ENCODE measurements at regions of chrX and their contacts with region 1.

Region 1: DNA sequence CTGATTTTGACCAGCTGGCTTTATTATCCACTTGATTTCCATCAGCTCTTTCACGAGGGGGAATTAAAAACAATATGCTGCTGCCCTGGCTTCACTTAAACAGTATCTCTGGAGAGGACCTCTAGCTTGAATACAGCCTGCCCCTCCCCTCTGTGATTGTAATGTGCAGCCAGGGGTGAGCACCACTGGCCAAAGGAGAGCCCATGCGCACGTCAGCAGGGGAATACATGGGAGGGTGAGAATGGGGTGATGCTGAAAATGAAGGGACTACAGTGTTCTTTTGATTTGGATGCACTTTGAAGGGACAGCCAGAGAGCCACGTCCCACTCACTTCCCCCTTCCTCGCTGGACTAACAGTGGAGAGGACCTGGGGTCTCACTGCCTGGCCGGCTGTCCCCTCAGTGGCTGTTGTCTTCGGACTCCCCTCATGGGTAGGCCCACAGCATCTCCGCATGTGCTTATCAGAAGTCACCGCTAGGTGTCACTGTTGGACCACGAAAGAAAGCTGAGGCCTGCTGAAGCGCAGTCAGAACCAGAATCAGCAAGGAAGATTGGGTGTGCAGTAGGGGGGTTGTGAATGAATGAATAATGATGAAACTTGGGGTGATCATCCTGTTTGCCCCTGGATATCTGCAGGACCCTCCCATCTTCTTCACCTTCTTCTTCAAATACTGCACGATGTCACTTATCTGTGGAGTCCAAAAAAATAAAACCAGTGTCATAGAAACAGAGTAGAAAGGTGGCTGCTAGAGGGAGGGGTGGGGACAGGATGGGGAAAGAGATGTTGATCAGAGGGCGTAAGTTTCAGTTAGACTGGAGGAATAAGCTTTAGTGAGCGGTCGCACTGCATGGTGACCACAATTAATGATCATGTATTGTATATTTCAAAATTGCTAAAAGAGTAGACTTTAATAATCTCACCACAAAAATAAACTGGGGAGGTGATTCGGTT is 32.8 kb downstream of the CLCN4 start:
- DNase-seq: peak; percentile 67
- H3K4me3 ChIP-seq: no peak overlapping the region
- H3K27ac ChIP-seq: peak overlapping the region; percentile 49
- H3K4me1 ChIP-seq: peaks cover 4% of the 10 kb centered on the region
- H3K27me3 ChIP-seq: no peaks in the 10 kb centered on the region
- CTCF ChIP-seq: peak; percentile 48 to 53
- POLR2A ChIP-seq: no peak

Region 2: DNA sequence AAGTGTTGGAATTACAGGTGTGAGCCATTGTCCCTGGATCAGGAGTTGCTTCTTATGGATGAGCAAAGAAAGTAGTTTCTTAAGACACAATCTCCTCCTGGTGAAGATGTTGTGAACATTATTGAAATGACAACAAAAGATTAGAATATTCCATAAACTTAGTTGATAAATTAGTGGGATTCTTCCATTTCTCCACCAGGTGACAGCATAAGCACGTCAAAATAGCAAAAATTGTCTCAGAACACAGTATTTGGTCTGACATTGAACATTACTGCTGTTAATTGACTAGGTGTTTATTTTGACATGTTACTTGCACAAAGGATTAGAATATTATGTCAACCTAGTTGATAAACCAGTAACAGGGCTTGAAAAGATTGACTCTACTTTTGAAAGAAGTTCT is 200.8 kb before region 1 on chrX:
- CTCF ChIA-PET with region 1: no interaction called
- POLR2A ChIA-PET with region 1: no interaction called
- dilution Hi-C with region 1: no loop called
- intact Hi-C with region 1: loop called (anchors 5 kb)
- DNase-seq: peak; percentile 35
- H3K4me3 ChIP-seq: no peak overlapping the region
- H3K27ac ChIP-seq: no peak overlapping the region
- H3K4me1 ChIP-seq: no peaks in the 10 kb centered on the region
- H3K27me3 ChIP-seq: no peaks in the 10 kb centered on the region
- CTCF ChIP-seq: peak; percentile 15 to 34
- POLR2A ChIP-seq: no peak

Region 3: DNA sequence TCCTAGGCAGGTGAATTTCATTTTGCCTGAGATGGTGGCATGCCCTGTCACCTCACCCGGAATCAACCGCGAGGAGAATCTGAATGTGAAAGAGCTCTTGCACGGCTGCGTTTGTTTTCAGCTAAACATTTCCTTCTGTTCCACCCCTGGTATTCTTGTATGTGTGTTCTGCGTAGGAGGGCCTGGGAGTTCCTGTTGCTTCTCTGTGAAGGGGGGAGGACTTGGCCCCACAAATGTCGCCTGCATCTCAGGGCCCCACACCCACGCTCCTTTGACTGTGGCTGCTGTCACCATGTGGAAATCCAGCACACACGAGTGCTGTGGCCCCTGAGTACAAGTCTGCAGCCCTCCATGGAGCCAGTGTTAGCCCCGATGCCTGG is 78.6 kb before region 1 on chrX:
- CTCF ChIA-PET with region 1: no interaction called
- POLR2A ChIA-PET with region 1: no interaction called
- dilution Hi-C with region 1: no loop called
- intact Hi-C with region 1: no loop called
- DNase-seq: peak; percentile 1
- H3K4me3 ChIP-seq: no peak overlapping the region
- H3K27ac ChIP-seq: peak overlapping the region; percentile 43
- H3K4me1 ChIP-seq: peaks cover 15% of the 10 kb centered on the region
- H3K27me3 ChIP-seq: no peaks in the 10 kb centered on the region
- CTCF ChIP-seq: no peak
- POLR2A ChIP-seq: no peak

Region 4: DNA sequence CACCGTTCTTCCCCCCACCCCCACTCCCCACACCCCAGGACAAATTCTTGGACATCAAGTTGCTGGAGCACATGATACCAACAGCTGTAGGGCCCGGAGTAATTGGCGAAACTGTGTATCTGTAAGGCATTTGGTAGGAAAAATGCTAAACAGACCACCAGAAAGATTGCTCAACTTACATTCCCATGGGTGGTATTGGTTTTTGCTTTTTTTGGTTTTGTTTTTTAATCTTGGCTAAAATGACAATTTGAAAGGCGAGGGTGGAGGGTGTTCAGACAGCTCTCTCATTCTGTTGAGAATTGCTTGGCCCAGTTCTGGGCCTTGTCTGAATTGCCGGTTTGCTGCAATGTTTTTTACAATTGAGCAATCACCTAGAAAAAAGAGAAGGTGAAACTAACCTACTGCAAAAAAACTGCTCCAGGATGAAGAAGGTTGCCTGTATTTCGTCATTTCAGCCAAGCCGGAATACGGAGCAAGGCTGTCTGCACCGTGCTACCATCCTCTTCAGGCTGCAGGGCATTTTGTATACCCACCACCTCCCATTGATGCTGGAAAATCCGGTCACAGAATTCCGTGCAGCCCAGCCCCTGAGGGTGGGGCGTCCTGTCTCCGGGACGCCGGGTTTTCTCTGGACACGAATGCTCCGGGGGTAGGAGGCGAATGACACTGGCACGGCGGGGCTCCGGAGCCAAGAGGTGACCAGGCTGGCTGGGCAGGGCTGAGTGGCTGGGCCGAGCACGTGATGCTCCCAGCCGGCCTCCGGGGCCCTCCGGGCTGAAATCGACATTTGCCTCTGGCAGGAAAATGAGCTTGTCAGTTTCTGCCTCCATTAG is 33.2 kb before region 1 on chrX and contains the start of gene CLCN4:
- CTCF ChIA-PET with region 1: no interaction called
- POLR2A ChIA-PET with region 1: no interaction called
- dilution Hi-C with region 1: no loop called
- intact Hi-C with region 1: no loop called
- DNase-seq: peak; percentile 46
- H3K4me3 ChIP-seq: peak within 1 kb of the TSS; percentile 38 to 91 (median 43)
- H3K27ac ChIP-seq: peak within 1 kb of the TSS; percentile 95
- H3K4me1 ChIP-seq: peaks cover 9% of the 10 kb centered on the region
- H3K27me3 ChIP-seq: no peaks in the 10 kb centered on the region
- CTCF ChIP-seq: no peak
- POLR2A ChIP-seq: peak; percentile 30
- total RNA-seq, gene CLCN4: 17.0 and 19.8 TPM in 2 replicates

Region 5: GRCh38 chrX:10217198-10217597 is 27.6 kb after region 1 on chrX:
- CTCF ChIA-PET with region 1: interaction called, 11 read pairs
- POLR2A ChIA-PET with region 1: no interaction called
- dilution Hi-C with region 1: no loop called
- intact Hi-C with region 1: no loop called
- DNase-seq: no peak
- H3K4me3 ChIP-seq: no peak overlapping the region
- H3K27ac ChIP-seq: no peak overlapping the region
- H3K4me1 ChIP-seq: no peaks in the 10 kb centered on the region
- H3K27me3 ChIP-seq: no peaks in the 10 kb centered on the region
- CTCF ChIP-seq: no peak
- POLR2A ChIP-seq: no peak

Region 6: DNA sequence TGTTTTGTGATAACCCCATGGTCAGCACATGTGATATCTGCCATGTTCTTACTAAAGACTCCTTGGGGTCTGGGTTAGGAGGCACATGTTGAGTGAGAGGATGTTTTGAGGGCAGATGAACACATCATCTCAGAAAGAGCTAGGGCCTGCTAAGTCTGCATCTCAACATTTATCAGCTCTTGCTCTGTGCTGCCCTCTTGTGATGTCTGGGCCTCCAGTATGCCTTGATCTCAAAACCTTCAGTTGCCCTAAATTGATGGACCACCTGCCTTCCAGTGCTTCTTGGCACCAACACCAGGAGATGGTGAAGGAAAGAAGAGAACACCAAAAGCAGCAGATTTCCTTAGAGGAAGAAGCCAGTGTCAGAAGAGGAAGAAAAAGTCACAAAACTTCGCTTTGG is 408.3 kb after region 1 on chrX:
- CTCF ChIA-PET with region 1: interaction called, 37 read pairs
- POLR2A ChIA-PET with region 1: no interaction called
- dilution Hi-C with region 1: no loop called
- intact Hi-C with region 1: loop called (anchors 1 kb)
- DNase-seq: peak; percentile 63
- H3K4me3 ChIP-seq: no peak overlapping the region
- H3K27ac ChIP-seq: no peak overlapping the region
- H3K4me1 ChIP-seq: no peaks in the 10 kb centered on the region
- H3K27me3 ChIP-seq: no peaks in the 10 kb centered on the region
- CTCF ChIP-seq: peak; percentile 46 to 63
- POLR2A ChIP-seq: no peak

Region 7: DNA sequence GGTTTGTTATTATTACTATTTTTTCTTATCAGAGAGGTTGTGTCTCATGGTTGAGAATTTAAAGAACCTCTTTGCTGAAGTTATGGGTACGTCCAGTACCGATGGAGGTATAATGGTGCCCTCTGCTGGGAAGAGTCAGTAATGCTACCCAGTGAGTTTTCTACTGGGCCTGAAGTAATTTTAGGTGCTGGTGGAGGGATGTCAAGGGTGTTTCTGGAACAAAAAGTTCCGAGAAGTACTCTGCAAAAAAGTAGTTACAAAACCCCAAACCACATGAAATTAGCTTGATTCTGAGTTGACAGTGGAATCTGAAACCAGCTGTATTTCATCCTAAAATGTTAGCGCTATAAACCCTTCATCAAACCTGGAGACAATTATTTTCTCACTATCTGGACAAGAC is 533.3 kb after region 1 on chrX:
- CTCF ChIA-PET with region 1: interaction called, 103 read pairs
- POLR2A ChIA-PET with region 1: no interaction called
- dilution Hi-C with region 1: no loop called
- intact Hi-C with region 1: loop called (anchors 1 kb)
- DNase-seq: peak; percentile 54
- H3K4me3 ChIP-seq: no peak overlapping the region
- H3K27ac ChIP-seq: no peak overlapping the region
- H3K4me1 ChIP-seq: peaks cover 2% of the 10 kb centered on the region
- H3K27me3 ChIP-seq: no peaks in the 10 kb centered on the region
- CTCF ChIP-seq: peak; percentile 49 to 55
- POLR2A ChIP-seq: no peak

Region 8: GRCh38 chrX:11100281-11101035 is 910.9 kb after region 1 on chrX:
- CTCF ChIA-PET with region 1: interaction called, 25 read pairs
- POLR2A ChIA-PET with region 1: no interaction called
- dilution Hi-C with region 1: no loop called
- intact Hi-C with region 1: loop called (anchors 1 kb)
- DNase-seq: peak; percentile 63
- H3K4me3 ChIP-seq: no peak overlapping the region
- H3K27ac ChIP-seq: peak overlapping the region; percentile 40
- H3K4me1 ChIP-seq: peaks cover 4% of the 10 kb centered on the region
- H3K27me3 ChIP-seq: no peaks in the 10 kb centered on the region
- CTCF ChIP-seq: peak; percentile 28 to 45
- POLR2A ChIP-seq: no peak